ENCODE measurements at regions of chr20 and their contacts with region 1.

Region 1: DNA sequence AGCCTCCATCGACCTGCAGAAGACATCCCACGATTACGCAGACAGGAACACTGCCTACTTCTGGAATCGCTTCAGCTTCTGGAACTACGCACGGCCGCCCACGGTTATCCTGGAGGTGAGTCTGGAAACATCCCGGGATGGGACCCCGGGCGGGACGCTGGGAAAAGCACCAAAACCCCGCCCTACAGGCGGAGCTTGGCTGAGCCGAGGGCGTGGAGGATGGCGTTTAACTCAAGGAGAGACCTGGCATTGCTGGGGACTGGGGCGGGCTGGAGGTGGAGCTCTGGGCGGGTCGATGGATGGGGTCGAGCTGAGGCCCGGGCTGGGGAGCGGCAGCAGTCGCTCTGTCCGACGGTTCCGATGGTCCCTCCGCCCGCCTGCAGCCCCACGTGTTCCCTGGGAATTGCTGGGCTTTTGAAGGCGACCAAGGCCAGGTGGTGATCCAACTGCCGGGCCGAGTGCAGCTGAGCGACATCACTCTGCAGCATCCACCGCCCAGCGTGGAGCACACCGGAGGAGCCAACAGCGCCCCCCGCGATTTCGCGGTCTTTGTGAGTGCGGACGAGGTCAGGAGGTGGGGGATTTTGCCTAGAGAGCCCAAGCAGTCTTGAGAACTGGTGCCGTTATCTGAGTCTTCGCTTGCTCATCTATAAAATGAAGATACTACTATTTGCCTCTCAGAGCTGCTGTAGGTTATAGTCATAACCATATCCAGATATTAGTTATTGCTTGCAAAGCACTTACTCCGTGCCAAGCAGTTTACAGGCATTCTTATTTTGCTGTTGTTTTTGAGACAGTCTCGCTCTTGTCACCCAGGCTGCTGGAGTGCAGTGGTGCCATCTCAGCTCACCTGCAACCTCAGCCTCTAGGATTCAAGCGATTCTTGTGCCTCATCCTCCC is 3.8 kb downstream of the SPAG4 start:
- DNase-seq: peak; percentile 92
- H3K4me3 ChIP-seq: peak overlapping the region; percentile 34 to 56 (median 43)
- H3K27ac ChIP-seq: peak overlapping the region; percentile 53 to 99 (median 88)
- H3K4me1 ChIP-seq: peaks cover 0 to 43% (median 33%) of the 10 kb centered on the region in 4 donors
- H3K27me3 ChIP-seq: no peaks in the 10 kb centered on the region
- CTCF ChIP-seq: peak in 2 of 4 experiments; percentile 6 to 10
- EP300 ChIP-seq: no peak
- POLR2A ChIP-seq: no peak

Region 2: GRCh38 chr20:35541783-35542588 is 77.5 kb before region 1 on chr20 and contains the start of gene ERGIC3:
- intact Hi-C with region 1: loop called (anchors 5 kb)
- DNase-seq: peak; percentile 98
- H3K4me3 ChIP-seq: peak within 1 kb of the TSS; percentile 68 to 88 (median 80)
- H3K27ac ChIP-seq: peak within 1 kb of the TSS; percentile 67 to 77 (median 72)
- H3K4me1 ChIP-seq: peaks cover 0 to 15% (median 14%) of the 10 kb centered on the region in 4 donors
- H3K27me3 ChIP-seq: no peaks in the 10 kb centered on the region
- CTCF ChIP-seq: no peak
- EP300 ChIP-seq: no peak
- POLR2A ChIP-seq: peak in 1 of 2 donors; percentile 20
- total RNA-seq, gene ERGIC3: 141 to 230 (median 195) TPM

Region 3: GRCh38 chr20:35771689-35772562 is 152.5 kb after region 1 on chr20 and contains the start of gene PHF20:
- intact Hi-C with region 1: loop called (anchors 2 kb)
- DNase-seq: peak; percentile 100
- H3K4me3 ChIP-seq: peak within 1 kb of the TSS; percentile 62 to 84 (median 73)
- H3K27ac ChIP-seq: peak within 1 kb of the TSS; percentile 93 to 97 (median 94)
- H3K4me1 ChIP-seq: peaks cover 0 to 60% (median 38%) of the 10 kb centered on the region in 4 donors
- H3K27me3 ChIP-seq: no peaks in the 10 kb centered on the region
- CTCF ChIP-seq: no peak
- EP300 ChIP-seq: peak; percentile 95 to 99 (median 97)
- POLR2A ChIP-seq: peak in 1 of 2 donors; percentile 29
- total RNA-seq, gene PHF20: 41.0 to 49.7 (median 45.5) TPM

Measured in sigmoid colon (tissue), 7 donors.